ENCODE measurements at regions of chr1 and their contacts with region 1.

Region 1: GRCh38 chr1:115706587-115707425 is 61.7 kb downstream of the CASQ2 start:
- DNase-seq: peak; percentile 24
- H3K4me3 ChIP-seq: no peak overlapping the region
- CTCF ChIP-seq: peak; percentile 55

Region 2: DNA sequence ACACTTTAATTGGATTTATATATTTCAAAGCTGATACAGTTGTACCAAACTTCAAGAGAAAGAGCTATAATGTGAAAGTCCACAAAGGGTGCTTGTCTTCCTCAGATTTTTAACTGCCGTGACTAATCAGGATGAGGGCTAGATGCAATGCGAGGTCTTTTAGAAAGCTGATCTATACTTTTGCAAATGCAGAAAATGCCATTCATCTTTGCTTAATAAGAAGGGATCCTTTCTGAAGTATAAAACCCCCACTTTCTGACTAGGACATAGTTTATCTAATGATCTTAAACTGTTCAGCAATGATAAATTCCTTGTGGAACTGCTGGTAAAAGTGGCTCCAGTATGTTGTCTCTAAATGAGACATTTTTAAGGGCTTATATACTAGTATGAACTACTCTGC is 266.1 kb before region 1 on chr1:
- CTCF ChIA-PET with region 1: no interaction called
- POLR2A ChIA-PET with region 1: no interaction called
- DNase-seq: no peak
- H3K4me3 ChIP-seq: no peak overlapping the region
- CTCF ChIP-seq: no peak

Region 3: DNA sequence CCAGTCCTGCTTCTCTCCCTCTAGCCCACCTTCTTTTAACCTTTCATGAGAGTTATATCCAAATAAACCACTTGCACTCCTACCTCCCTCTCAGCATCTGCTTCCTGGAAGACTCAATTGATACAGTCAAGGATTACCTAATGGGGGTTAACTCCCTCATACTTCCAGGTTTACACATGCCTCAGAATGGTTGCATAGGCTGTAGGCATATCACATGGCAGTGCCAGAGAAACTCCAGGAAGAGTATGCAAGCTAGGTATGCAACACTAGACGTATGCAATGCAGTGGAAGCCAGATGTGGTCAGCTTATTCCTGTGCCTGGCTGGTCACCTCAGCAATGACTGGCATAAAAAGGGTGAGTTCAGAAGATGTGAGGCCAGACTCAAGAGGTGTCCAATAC is 97.8 kb before region 1 on chr1:
- CTCF ChIA-PET with region 1: interaction called, 78 read pairs
- POLR2A ChIA-PET with region 1: no interaction called
- DNase-seq: no peak
- H3K4me3 ChIP-seq: no peak overlapping the region
- CTCF ChIP-seq: no peak

Region 4: GRCh38 chr1:115654663-115655305 is 52.0 kb before region 1 on chr1:
- CTCF ChIA-PET with region 1: interaction called, 15 read pairs
- POLR2A ChIA-PET with region 1: no interaction called
- DNase-seq: no peak
- H3K4me3 ChIP-seq: no peak overlapping the region
- CTCF ChIP-seq: no peak

Region 5: DNA sequence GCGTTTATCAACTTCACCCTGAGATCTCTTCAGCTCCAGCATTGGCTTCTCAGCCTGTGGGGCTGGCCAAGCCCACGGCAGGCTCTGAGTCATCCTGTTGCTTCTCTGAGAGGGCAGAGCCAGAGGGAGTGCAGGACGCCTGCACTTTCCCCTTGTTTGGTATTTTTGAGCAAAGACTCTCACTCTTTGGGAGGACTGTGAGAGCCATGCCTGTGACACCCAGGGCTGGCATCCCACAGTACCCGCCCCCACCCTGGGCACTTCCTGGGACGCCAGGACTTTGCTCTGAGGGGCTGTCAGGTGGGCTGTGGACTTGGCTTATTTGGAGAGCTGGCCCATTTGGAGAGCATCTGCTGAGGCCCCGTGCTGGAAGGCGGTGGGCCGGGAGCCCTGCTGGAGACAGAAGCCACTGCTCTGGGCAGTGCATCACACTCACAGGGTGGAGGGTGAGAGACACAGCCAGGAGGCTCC is 27.6 kb before region 1 on chr1:
- CTCF ChIA-PET with region 1: interaction called, 20 read pairs
- POLR2A ChIA-PET with region 1: no interaction called
- DNase-seq: no peak
- H3K4me3 ChIP-seq: no peak overlapping the region
- CTCF ChIP-seq: no peak

Region 6: GRCh38 chr1:115694805-115695204 is 12.0 kb before region 1 on chr1:
- CTCF ChIA-PET with region 1: interaction called, 91 read pairs
- POLR2A ChIA-PET with region 1: no interaction called
- DNase-seq: no peak
- H3K4me3 ChIP-seq: no peak overlapping the region
- CTCF ChIP-seq: no peak

Region 7: DNA sequence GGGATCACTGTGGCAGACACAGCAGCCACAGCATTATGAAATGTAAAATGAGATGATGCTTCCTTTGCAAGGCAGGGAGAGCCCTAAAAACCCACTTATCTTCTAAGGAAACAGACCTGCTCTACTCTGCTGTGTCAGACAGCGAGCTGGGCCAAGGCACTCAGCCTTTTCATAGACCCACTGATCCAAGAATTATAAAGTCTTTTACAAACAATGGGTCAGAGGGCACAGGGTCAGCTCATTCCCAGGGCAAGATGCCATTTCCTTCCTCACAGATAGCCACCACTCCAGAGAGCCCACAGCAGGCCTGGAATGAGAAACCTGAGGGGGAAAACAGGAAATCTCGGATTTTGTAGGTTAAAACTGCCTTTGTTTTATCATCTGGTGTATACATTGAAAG is 18.8 kb after region 1 on chr1:
- CTCF ChIA-PET with region 1: interaction called, 16 read pairs
- POLR2A ChIA-PET with region 1: no interaction called
- DNase-seq: no peak
- H3K4me3 ChIP-seq: no peak overlapping the region
- CTCF ChIP-seq: no peak

Region 8: GRCh38 chr1:115764541-115764940 is 57.7 kb after region 1 on chr1:
- CTCF ChIA-PET with region 1: interaction called, 16 read pairs
- POLR2A ChIA-PET with region 1: no interaction called
- DNase-seq: no peak
- H3K4me3 ChIP-seq: no peak overlapping the region
- CTCF ChIP-seq: peak; percentile 19

Region 9: GRCh38 chr1:115924770-115925169 is 218.0 kb after region 1 on chr1:
- CTCF ChIA-PET with region 1: no interaction called
- POLR2A ChIA-PET with region 1: no interaction called
- DNase-seq: no peak
- H3K4me3 ChIP-seq: no peak overlapping the region
- CTCF ChIP-seq: no peak

Measured in AG04449 (cell line).